IMR-90 (cell line): ENCODE measurements at regions of chr12 and their contacts with region 1.

Region 1: DNA sequence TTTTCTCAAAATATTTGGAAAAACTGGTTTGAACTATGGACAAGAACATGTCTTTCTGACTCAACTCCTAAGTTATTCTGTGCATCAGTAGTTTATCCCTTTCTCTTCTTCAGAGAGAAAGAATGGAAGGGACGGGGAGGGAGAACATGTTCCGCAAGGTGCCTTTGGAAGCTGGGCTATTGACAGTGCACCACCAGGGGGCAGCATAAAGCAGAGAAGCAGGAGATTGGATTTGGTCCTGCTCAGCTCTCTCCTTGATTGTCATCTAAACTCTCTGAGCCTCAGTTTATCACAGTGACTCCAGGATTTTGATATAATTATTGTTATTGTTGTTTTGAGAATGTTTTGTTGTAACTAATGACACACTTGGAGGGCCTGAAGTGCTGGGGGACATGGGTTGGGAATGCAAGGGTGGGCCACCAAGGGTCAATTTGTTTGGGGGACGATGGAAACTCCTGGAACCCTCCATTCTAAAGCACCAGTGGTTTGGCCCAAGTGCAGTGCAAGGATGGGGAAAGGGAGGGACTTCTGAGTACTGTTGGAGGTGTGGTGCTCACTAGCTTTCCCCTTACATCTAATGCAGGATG is 45.3 kb upstream of the ANO6 start:
- DNase-seq: peak; percentile 77
- ATAC-seq: peak; percentile 87
- H3K4me3 ChIP-seq: no peak overlapping the region
- H3K27ac ChIP-seq: no peak overlapping the region
- H3K4me1 ChIP-seq: no peaks in the 10 kb centered on the region
- H3K27me3 ChIP-seq: peaks cover 2% of the 10 kb centered on the region; the same call in 1 of the 2 replicates
- CTCF ChIP-seq: peak; percentile 88
- POLR2A ChIP-seq: no peak
- RAD21 ChIP-seq: peak; percentile 92

Region 2: GRCh38 chr12:45377815-45378214 is 207.3 kb after region 1 on chr12:
- CTCF ChIA-PET with region 1: no interaction called
- POLR2A ChIA-PET with region 1: no interaction called
- dilution Hi-C with region 1: no loop called
- in situ Hi-C with region 1: no loop called
- intact Hi-C with region 1: no loop called
- DNase-seq: no peak
- ATAC-seq: no peak; the same call in 1 of the 2 replicates
- H3K4me3 ChIP-seq: no peak overlapping the region
- H3K27ac ChIP-seq: no peak overlapping the region
- H3K4me1 ChIP-seq: no peaks in the 10 kb centered on the region
- H3K27me3 ChIP-seq: no peaks in the 10 kb centered on the region
- CTCF ChIP-seq: no peak
- POLR2A ChIP-seq: no peak
- RAD21 ChIP-seq: no peak

Region 3: DNA sequence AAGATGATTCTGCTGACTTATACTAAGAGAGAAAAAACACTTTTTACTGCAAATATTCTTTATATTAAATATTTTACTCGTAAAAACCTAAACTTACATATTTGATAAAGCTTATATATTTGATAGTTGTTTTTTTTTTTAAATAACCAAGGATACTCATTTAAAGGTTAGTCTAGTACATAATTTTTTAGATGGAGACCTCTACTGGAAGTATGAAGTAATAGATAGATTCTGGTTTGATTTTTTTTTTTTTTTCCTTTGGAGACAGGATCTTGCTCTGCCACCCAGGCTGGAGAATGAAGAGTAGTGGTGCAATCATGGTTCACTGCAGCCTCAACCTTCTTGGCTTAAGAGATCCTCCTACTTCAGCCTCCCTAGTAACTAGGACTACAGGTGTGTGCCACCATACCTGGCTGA is 575.3 kb after region 1 on chr12:
- CTCF ChIA-PET with region 1: no interaction called
- POLR2A ChIA-PET with region 1: no interaction called
- dilution Hi-C with region 1: no loop called
- in situ Hi-C with region 1: loop called (anchors 10 kb)
- intact Hi-C with region 1: no loop called
- DNase-seq: peak; percentile 46
- ATAC-seq: peak; percentile 72; the same call in 1 of the 2 replicates
- H3K4me3 ChIP-seq: no peak overlapping the region
- H3K27ac ChIP-seq: no peak overlapping the region
- H3K4me1 ChIP-seq: no peaks in the 10 kb centered on the region
- H3K27me3 ChIP-seq: no peaks in the 10 kb centered on the region
- CTCF ChIP-seq: peak; percentile 50
- POLR2A ChIP-seq: no peak
- RAD21 ChIP-seq: peak; percentile 31; the same call in 1 of the 2 replicates